ENCODE measurements at regions of chr12 and their contacts with region 1.

Region 1: GRCh38 chr12:65556681-65557437 is 267.4 kb upstream of the HMGA2 start:
- DNase-seq: peak; percentile 82
- ATAC-seq: peak; percentile 93
- H3K4me3 Mint-ChIP-seq: no peak overlapping the region
- H3K27ac Mint-ChIP-seq: no peak overlapping the region
- H3K4me1 Mint-ChIP-seq: peaks cover 2% of the 10 kb centered on the region
- H3K27me3 Mint-ChIP-seq: peaks cover 15% of the 10 kb centered on the region

Region 2: GRCh38 chr12:65673732-65674131 is 116.9 kb after region 1 on chr12:
- CTCF ChIA-PET with region 1: no interaction called
- POLR2A ChIA-PET with region 1: no interaction called
- intact Hi-C with region 1: loop called in 1 of 2 experiments (anchors 1 kb)
- DNase-seq: no peak
- ATAC-seq: no peak
- H3K4me3 Mint-ChIP-seq: no peak overlapping the region
- H3K27ac Mint-ChIP-seq: no peak overlapping the region
- H3K4me1 Mint-ChIP-seq: peaks cover 12% of the 10 kb centered on the region
- H3K27me3 Mint-ChIP-seq: peaks cover 43% of the 10 kb centered on the region

Region 3: DNA sequence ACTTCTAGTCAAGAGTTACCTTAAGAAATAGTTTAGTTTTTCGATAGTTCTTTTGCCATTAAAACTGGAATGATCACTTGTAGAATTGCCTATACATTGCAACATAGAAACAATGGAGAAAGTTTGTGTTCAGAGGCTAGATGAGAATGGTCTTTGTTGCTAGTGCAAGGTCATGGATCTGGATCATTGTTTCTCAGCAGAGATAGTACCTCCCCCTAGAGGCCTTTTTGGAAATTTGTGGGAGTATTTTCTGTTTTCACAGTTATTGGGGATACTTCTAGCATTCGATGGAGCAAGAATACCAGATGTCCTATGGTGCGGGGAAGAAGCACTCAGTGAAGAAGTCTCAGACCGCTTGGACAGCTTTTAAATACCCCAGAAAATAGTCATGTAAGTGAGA is 128.7 kb after region 1 on chr12:
- CTCF ChIA-PET with region 1: interaction called, 6 read pairs
- POLR2A ChIA-PET with region 1: no interaction called
- intact Hi-C with region 1: loop called (anchors 1 to 2 kb)
- DNase-seq: no peak
- ATAC-seq: no peak
- H3K4me3 Mint-ChIP-seq: no peak overlapping the region
- H3K27ac Mint-ChIP-seq: no peak overlapping the region
- H3K4me1 Mint-ChIP-seq: no peaks in the 10 kb centered on the region
- H3K27me3 Mint-ChIP-seq: peaks cover 25% of the 10 kb centered on the region

Region 4: GRCh38 chr12:65986047-65986446 is 429.2 kb after region 1 on chr12:
- CTCF ChIA-PET with region 1: interaction called, 4 read pairs
- POLR2A ChIA-PET with region 1: no interaction called
- intact Hi-C with region 1: loop called (anchors 2 to 5 kb)
- DNase-seq: no peak
- ATAC-seq: no peak
- H3K4me3 Mint-ChIP-seq: no peak overlapping the region
- H3K27ac Mint-ChIP-seq: no peak overlapping the region
- H3K4me1 Mint-ChIP-seq: no peaks in the 10 kb centered on the region
- H3K27me3 Mint-ChIP-seq: peaks cover 5% of the 10 kb centered on the region

Region 5: DNA sequence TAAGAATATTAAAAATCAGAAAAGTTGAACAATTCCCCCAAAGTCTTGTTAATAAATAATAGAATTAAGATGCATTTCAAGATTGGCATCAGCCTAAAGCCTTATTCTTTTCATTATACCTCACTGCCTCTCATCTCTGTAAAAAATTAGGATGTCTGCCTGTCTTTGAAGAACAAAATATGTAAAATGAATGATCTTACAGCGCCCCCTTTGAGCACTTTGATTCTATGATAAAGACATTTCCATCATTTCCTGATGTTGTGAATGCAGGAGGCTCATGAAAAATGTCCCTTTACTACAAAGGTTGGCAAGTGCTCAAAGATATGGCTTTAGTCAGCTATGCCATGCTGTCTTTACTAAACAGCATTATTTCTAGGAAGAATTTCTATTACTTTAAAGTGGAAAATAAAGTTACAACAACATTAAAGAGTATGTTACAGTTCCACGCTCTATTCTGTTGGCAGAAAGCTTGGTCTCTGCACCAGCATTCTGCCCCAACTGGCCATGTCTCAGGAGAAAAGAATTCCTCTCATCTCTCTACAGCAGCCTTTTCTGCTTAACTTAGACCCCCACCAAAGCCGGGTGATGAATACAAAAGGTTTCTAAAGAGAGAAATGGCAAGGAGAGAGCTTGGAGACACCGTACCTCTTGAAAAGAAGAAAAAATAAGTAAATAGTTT is 478.6 kb after region 1 on chr12:
- CTCF ChIA-PET with region 1: interaction called, 7 read pairs
- POLR2A ChIA-PET with region 1: no interaction called
- intact Hi-C with region 1: loop called in 1 of 2 experiments (anchors 5 kb)
- DNase-seq: no peak
- ATAC-seq: no peak
- H3K4me3 Mint-ChIP-seq: no peak overlapping the region
- H3K27ac Mint-ChIP-seq: no peak overlapping the region
- H3K4me1 Mint-ChIP-seq: no peaks in the 10 kb centered on the region
- H3K27me3 Mint-ChIP-seq: peaks cover 22% of the 10 kb centered on the region

Region 6: DNA sequence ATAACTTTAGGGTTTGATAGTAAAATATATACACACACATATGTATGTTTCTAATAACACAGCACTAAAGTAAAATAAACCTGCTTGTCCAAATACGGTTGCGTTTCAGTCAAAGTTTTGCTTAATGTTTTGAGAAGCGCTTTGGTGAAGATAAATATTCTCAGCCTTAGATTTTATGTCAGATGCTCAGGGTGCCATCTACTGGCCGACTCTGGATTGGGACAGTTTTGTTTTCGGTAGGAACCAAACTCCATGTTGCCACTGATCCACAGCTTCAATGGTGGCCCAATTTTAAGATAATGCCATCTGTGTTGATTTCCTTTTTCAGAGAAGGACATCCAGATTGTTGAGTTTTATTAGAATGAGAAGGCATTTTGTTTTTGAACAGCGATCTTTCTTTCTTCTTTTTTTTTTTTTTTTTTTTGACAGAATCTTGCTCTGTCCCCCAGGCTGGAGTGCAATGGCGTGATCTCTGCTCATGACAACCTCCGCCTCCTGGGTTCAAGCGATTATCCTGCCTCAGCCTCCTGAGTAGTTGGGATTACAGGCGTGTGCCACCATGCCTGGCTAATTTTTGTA is 530.6 kb after region 1 on chr12:
- CTCF ChIA-PET with region 1: interaction called, 3 read pairs
- POLR2A ChIA-PET with region 1: no interaction called
- intact Hi-C with region 1: loop called (anchors 1 kb)
- DNase-seq: peak; percentile 76
- ATAC-seq: peak; percentile 60
- H3K4me3 Mint-ChIP-seq: no peak overlapping the region
- H3K27ac Mint-ChIP-seq: no peak overlapping the region
- H3K4me1 Mint-ChIP-seq: no peaks in the 10 kb centered on the region
- H3K27me3 Mint-ChIP-seq: peaks cover 15% of the 10 kb centered on the region

Region 7: DNA sequence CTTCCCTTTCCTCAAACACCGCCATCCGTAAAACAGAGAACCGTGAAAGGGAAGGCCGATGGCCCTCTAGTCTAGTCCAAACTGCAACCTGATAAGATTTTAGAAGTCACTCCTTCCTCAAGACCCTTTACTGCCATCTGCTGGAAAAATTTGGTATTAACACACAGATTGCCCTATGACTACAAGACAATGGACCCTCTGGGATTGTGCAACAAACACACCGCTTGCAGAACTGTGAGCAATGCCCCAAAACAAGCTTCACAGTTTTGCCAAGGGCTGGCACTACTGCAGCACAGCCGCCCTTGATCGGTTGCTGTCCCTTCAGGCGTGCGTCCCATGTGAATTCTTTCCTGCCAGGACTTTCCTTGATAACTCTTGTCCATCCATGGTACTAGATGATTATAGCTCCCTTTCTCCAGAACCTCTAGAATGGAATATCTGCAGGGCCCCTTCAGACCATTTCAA is 550.6 kb after region 1 on chr12:
- CTCF ChIA-PET with region 1: no interaction called
- POLR2A ChIA-PET with region 1: no interaction called
- intact Hi-C with region 1: loop called (anchors 5 kb)
- DNase-seq: peak; percentile 51
- ATAC-seq: peak; percentile 92
- H3K4me3 Mint-ChIP-seq: no peak overlapping the region
- H3K27ac Mint-ChIP-seq: no peak overlapping the region
- H3K4me1 Mint-ChIP-seq: peaks cover 2% of the 10 kb centered on the region
- H3K27me3 Mint-ChIP-seq: peaks cover 10% of the 10 kb centered on the region